ENCODE measurements at regions of chr22 and their contacts with region 1.

Region 1: GRCh38 chr22:30289134-30289979 is at the start of gene CASTOR1:
- DNase-seq: peak; percentile 93
- ATAC-seq: peak; percentile 88
- H3K4me3 Mint-ChIP-seq: peak within 1 kb of the TSS; percentile 72
- H3K27ac Mint-ChIP-seq: peak within 1 kb of the TSS; percentile 72
- H3K4me1 Mint-ChIP-seq: peaks cover 23% of the 10 kb centered on the region
- H3K27me3 Mint-ChIP-seq: no peaks in the 10 kb centered on the region
- total RNA-seq, gene CASTOR1: 1.6 to 2.2 TPM

Region 2: DNA sequence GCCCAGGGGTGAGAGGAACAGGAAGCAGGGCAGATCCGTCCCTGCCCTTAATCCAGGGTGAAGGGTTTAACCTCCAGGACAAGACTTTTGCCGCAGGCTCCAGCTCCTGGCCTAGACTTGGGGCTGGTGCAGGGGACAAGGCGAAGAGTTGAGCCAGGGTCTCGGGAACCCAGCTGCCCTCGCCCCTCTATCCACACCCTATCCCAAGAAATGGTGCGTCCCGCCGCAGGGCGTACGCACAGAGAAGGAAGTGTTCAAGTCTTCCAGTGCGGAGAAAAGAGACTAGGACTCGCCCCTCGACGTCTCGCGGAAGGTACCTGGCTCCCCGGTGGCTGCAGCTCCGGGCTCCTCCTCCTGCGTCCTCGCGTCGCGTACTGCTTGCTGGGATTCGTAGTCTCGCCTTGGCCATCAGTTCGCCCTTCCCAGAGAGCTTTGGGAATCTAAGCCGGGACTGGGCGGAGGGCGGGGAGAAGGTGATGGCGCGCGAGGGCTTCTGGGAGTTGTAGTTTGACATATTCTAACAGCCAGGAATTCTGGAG is 522.7 kb before region 1 on chr22 and contains the start of gene ZMAT5:
- CTCF ChIA-PET with region 1: no interaction called
- POLR2A ChIA-PET with region 1: no interaction called
- intact Hi-C with region 1: loop called in 1 of 2 experiments (anchors 1 kb)
- DNase-seq: peak; percentile 96
- ATAC-seq: peak; percentile 97
- H3K4me3 Mint-ChIP-seq: peak within 1 kb of the TSS; percentile 99
- H3K27ac Mint-ChIP-seq: peak within 1 kb of the TSS; percentile 98
- H3K4me1 Mint-ChIP-seq: peaks cover 31% of the 10 kb centered on the region
- H3K27me3 Mint-ChIP-seq: no peaks in the 10 kb centered on the region
- total RNA-seq, gene ZMAT5: 19.2 to 25.1 TPM

Region 3: GRCh38 chr22:30253205-30253852 is 36.0 kb before region 1 on chr22:
- CTCF ChIA-PET with region 1: interaction called, 6 read pairs
- POLR2A ChIA-PET with region 1: no interaction called
- intact Hi-C with region 1: loop called in 1 of 2 experiments (anchors 1 kb)
- DNase-seq: no peak
- ATAC-seq: no peak
- H3K4me3 Mint-ChIP-seq: no peak overlapping the region
- H3K27ac Mint-ChIP-seq: no peak overlapping the region
- H3K4me1 Mint-ChIP-seq: peaks cover 25% of the 10 kb centered on the region
- H3K27me3 Mint-ChIP-seq: no peaks in the 10 kb centered on the region

Region 4: DNA sequence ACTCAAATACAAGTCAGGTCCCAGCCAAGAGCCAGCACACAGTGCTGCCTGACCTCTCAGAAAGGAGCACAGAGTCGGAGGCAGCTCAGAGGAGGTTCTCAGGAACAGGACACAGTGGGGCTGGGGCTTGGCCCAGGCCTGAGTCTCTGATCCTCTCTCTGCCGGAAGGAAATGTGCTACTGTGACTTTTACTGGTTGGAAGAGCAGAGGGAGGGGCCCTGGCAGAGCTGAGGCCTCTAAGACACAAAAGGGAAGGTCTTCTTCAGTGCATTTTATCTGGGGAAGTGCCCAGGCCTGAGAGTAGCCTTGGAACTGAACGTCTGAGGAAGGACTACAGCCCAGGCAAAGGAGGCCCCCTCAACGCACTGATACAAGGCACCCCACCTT is 16.2 kb after region 1 on chr22:
- CTCF ChIA-PET with region 1: interaction called, 17 read pairs
- POLR2A ChIA-PET with region 1: interaction called, 3 read pairs
- intact Hi-C with region 1: loop called in 1 of 2 experiments (anchors 2 kb)
- DNase-seq: peak; percentile 68
- ATAC-seq: peak; percentile 79
- H3K4me3 Mint-ChIP-seq: peak overlapping the region; percentile 59
- H3K27ac Mint-ChIP-seq: peak overlapping the region; percentile 85
- H3K4me1 Mint-ChIP-seq: peaks cover 97% of the 10 kb centered on the region
- H3K27me3 Mint-ChIP-seq: no peaks in the 10 kb centered on the region

Region 5: DNA sequence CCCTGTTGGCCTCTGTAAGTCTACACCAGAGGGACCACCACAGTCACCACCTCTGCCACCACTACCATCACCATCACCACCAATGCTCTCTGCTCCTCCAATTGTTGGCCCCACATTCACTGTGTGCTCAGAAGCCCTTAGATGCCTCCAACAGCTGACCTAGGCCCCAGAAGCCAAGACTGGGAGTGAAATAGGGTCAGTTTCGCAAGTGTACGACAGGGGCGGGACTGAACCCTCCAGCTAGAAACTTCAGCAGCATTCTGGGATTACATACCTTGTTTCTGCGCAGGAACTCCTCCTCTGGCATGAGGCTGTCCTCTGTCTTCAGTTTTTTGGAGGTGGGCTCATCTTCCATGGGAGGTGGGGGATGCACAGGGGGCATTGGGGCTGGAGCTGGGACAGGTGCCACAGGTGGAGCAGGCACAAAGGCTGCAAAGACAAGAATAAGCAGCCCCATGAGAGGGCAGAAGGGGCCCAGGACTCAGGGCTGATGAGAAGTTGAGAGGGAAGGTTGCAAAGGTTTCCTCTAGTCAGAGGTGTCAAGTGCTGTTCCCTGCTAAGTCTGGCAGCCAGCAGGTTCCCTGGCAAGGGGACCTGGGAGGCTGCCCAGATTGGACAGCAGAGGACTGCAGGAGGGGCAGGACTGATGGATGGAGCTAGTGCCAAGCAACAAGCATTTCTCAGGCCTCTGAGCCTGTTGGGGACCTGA is 47.5 kb after region 1 on chr22:
- CTCF ChIA-PET with region 1: interaction called, 10 read pairs
- POLR2A ChIA-PET with region 1: interaction called, 3 read pairs
- intact Hi-C with region 1: no loop called
- DNase-seq: no peak
- ATAC-seq: no peak
- H3K4me3 Mint-ChIP-seq: no peak overlapping the region
- H3K27ac Mint-ChIP-seq: peak overlapping the region; percentile 29
- H3K4me1 Mint-ChIP-seq: peaks cover 43% of the 10 kb centered on the region
- H3K27me3 Mint-ChIP-seq: no peaks in the 10 kb centered on the region

Region 6: GRCh38 chr22:30386960-30387827 is 97.8 kb after region 1 on chr22 and contains the start of gene RNF215:
- CTCF ChIA-PET with region 1: interaction called, 202 read pairs
- POLR2A ChIA-PET with region 1: no interaction called
- intact Hi-C with region 1: loop called (anchors 1 kb)
- DNase-seq: peak; percentile 87
- ATAC-seq: peak; percentile 77
- H3K4me3 Mint-ChIP-seq: peak within 1 kb of the TSS; percentile 73
- H3K27ac Mint-ChIP-seq: peak within 1 kb of the TSS; percentile 9
- H3K4me1 Mint-ChIP-seq: peaks cover 15% of the 10 kb centered on the region
- H3K27me3 Mint-ChIP-seq: no peaks in the 10 kb centered on the region
- total RNA-seq, gene RNF215: 4.3 to 7.4 TPM

Region 7: DNA sequence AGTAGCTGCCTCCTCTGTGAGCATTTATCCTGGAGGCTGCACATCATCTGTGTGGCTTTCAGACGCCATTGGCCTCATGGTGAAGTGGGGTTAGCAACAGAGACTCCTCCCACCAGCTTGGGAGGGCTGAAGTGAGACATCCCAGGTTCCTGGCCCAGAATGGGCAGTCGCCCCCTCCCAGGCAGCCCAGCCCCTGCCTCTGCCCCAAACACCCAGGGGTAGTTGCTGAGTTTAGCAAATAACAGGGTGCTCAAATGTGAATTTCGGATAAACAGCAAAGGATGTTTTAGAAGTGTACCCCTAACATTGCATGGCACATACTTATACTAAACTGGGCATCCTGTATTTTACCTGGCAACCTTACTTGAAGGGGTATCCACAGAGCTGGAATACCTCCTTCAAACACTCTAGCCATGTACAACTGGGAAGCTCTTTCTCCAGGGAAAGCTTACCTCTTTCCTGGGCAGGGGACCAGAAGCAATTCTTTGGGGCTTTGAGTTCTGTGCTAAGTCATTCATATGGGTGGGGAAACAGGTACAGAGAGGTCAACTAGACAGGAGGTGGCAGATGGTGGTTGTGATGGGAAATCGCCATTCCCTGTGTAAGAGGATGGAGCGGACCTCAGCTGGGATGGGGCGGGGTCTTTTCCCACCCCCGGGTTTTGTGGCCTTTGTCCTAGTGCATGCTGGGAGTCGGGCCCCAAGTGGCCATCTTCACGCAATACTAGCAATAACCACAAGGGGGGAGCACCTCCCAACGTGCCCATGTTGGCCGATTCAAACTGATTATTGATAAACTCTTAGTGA is 155.5 kb after region 1 on chr22:
- CTCF ChIA-PET with region 1: interaction called, 9 read pairs
- POLR2A ChIA-PET with region 1: no interaction called
- intact Hi-C with region 1: loop called in 1 of 2 experiments (anchors 1 kb)
- DNase-seq: peak; percentile 81
- ATAC-seq: peak; percentile 73
- H3K4me3 Mint-ChIP-seq: no peak overlapping the region
- H3K27ac Mint-ChIP-seq: no peak overlapping the region
- H3K4me1 Mint-ChIP-seq: peaks cover 16% of the 10 kb centered on the region
- H3K27me3 Mint-ChIP-seq: peaks cover 17% of the 10 kb centered on the region

Measured in activated CD4-positive, alpha-beta T cell treated with anti-CD3 and anti-CD28 coated beads for 36 hours (primary cell).